ENCODE measurements at regions of chr3 and their contacts with region 1.

Region 1: DNA sequence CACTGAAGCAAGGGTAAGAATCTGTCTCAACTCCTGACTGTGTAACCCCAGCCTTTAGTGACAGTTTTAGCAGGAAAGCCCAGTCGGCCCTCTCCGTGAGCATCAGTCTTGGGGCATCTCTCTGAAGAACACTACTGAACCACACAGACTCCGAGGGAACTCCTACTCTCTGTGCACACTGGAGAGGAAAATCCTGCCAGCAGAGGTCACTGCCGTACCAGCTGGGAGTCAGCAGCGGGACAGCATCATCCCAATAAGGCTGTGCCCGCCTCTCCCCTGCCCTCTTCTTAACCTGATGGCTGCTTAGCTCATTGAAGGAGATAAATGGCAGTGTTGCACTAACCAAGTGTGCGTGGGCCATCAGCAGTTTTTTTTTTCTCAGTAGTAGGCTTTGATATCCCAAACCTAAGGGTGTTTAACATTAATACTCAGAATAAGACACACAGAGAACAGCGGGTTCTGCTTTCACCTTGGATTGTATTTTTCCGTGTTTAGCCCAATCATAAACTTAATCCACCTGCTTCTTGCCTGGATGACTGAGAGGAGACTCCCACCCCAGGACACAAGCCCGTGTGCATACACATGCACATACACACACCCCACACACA is 26.6 kb upstream of the RASA2 start:
- DNase-seq: peak; percentile 92
- H3K4me3 ChIP-seq: no peak overlapping the region
- H3K27ac ChIP-seq: no peak overlapping the region
- H3K4me1 ChIP-seq: no peaks in the 10 kb centered on the region
- H3K27me3 ChIP-seq: no peaks in the 10 kb centered on the region
- CTCF ChIP-seq: peak; percentile 37 to 70 (median 63)
- POLR2A ChIP-seq: no peak

Region 2: GRCh38 chr3:141561426-141562034 is 101.3 kb after region 1 on chr3:
- intact Hi-C with region 1: loop called (anchors 10 kb)
- DNase-seq: peak; percentile 28
- H3K4me3 ChIP-seq: no peak overlapping the region
- H3K27ac ChIP-seq: no peak overlapping the region
- H3K4me1 ChIP-seq: peaks cover 5% of the 10 kb centered on the region
- H3K27me3 ChIP-seq: no peaks in the 10 kb centered on the region
- CTCF ChIP-seq: peak; percentile 84 to 96 (median 90)
- POLR2A ChIP-seq: no peak

Measured in testis (tissue), 5 donors.